Colonic mucosa (tissue), 4 donors: ENCODE measurements at regions of chr5 and their contacts with region 1.

Region 1: DNA sequence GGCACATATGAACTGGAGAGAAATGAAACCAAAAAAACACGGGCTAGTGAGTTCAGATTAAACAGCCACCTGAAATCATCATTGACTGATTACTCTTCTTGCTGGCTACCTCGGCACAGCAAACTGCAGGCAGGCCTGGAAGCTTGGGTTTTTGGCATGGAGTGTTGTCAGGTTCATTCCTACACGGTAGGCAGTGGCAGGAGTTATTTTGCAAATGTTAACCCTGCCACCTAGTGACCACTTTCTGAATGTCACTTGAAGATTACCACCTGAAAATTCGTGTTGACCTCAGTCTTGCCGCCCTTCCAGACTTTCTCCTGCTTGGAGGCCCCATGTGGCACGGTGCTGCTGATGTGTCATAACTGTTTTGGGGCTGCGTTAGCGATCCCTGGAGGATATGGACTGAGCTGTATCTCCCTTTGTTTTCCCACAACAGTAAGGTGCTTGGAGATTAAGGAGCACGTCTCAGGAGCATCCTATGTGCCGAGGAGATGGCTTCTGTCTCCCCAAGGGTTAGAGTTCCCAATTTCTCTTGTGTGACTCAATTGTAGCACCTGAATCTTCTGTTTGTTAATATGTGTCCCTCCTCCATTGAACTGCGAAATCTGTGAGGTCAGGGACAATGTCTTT is 12.7 kb upstream of the CD180 start:
- DNase-seq: peak; percentile 87
- H3K4me3 ChIP-seq: no peak overlapping the region
- H3K27ac ChIP-seq: no peak overlapping the region
- H3K4me1 ChIP-seq: peaks cover 6% of the 10 kb centered on the region
- H3K27me3 ChIP-seq: no peaks in the 10 kb centered on the region
- CTCF ChIP-seq: peak; percentile 87

Region 2: GRCh38 chr5:66814146-66814991 is 394.9 kb before region 1 on chr5:
- intact Hi-C with region 1: loop called (anchors 5 kb)
- DNase-seq: peak; percentile 50
- H3K4me3 ChIP-seq: no peak overlapping the region
- H3K27ac ChIP-seq: no peak overlapping the region
- H3K4me1 ChIP-seq: no peaks in the 10 kb centered on the region
- H3K27me3 ChIP-seq: no peaks in the 10 kb centered on the region
- CTCF ChIP-seq: peak; percentile 76

Region 3: DNA sequence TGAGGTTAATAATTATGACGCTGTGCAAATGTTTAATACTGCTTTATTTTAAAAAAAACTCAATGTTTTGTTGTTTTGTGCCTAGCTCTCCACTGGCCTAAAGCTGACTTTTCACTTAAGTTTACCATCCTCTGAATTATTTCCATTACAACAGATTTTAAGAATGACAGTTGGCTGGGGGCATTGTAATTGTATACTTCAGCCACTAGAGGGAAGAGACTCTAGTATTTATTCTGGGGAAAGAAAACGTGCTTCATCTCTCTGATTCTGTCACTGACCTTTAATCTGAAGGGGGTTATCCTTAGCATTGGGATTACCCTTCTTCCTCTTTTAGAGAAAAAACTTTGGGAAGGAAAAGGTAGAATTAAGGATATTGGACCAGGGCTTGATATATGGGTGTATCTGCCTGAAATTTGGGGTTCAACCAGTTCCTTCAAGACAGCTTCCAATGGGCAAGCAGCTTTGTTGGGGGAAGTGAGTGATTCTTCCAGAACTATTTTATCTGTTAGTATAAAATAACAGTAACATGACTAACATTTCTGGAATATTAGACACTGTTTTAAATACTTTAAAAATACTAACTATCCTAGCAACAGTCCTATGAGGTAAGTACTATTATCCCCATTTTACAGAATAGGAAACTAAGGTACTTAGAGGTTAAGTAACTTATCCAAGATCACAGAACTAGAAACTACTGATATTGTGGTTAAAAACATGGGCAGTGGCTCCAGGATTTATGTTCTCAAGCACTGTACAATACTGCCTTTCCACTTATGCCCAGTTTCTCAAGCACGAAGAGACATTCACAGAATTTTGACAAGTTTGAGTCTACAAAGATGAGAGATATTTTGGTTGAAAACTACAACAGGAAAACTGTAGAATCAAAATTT is 221.1 kb before region 1 on chr5:
- intact Hi-C with region 1: loop called (anchors 10 kb)
- DNase-seq: no peak
- H3K4me3 ChIP-seq: no peak overlapping the region
- H3K27ac ChIP-seq: no peak overlapping the region
- H3K4me1 ChIP-seq: peaks cover 3% of the 10 kb centered on the region
- H3K27me3 ChIP-seq: no peaks in the 10 kb centered on the region
- CTCF ChIP-seq: peak; percentile 81

Region 4: DNA sequence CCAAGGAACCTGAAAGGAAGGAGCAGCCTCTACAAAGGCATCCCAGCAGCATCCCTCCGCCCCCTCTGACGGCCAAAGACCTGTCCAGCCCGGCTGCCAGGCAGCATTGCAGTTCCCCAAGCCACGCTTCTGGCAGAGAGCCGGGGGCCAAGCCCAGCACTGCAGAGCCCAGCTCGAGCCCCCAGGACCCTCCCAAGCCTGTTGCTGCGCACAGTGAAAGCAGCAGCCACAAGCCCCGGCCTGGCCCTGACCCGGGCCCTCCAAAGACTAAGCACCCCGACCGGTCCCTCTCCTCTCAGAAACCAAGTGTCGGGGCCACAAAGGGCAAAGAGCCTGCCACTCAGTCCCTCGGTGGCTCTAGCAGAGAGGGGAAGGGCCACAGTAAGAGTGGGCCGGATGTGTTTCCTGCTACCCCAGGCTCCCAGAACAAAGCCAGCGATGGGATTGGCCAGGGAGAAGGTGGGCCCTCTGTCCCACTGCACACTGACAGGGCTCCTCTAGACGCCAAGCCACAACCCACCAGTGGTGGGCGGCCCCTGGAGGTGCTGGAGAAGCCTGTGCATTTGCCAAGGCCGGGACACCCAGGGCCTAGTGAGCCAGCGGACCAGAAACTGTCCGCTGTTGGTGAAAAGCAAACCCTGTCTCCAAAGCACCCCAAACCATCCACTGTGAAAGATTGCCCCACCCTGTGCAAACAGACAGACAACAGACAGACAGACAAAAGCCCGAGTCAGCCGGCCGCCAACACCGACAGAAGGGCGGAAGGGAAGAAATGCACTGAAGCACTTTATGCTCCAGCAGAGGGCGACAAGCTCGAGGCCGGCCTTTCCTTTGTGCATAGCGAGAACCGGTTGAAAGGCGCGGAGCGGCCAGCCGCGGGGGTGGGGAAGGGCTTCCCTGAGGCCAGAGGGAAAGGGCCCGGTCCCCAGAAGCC is 43.5 kb before region 1 on chr5:
- intact Hi-C with region 1: loop called (anchors 5 kb)
- DNase-seq: peak; percentile 91
- H3K4me3 ChIP-seq: peak overlapping the region; percentile 31
- H3K27ac ChIP-seq: peak overlapping the region; percentile 63
- H3K4me1 ChIP-seq: peaks cover 4% of the 10 kb centered on the region
- H3K27me3 ChIP-seq: no peaks in the 10 kb centered on the region
- CTCF ChIP-seq: peak; percentile 82

Region 5: GRCh38 chr5:67257500-67257899 is 48.2 kb after region 1 on chr5:
- intact Hi-C with region 1: no loop called
- DNase-seq: no peak
- H3K4me3 ChIP-seq: no peak overlapping the region
- H3K27ac ChIP-seq: no peak overlapping the region
- H3K4me1 ChIP-seq: no peaks in the 10 kb centered on the region
- H3K27me3 ChIP-seq: no peaks in the 10 kb centered on the region
- CTCF ChIP-seq: no peak